ENCODE measurements at regions of chr17 and their contacts with region 1.

Region 1: DNA sequence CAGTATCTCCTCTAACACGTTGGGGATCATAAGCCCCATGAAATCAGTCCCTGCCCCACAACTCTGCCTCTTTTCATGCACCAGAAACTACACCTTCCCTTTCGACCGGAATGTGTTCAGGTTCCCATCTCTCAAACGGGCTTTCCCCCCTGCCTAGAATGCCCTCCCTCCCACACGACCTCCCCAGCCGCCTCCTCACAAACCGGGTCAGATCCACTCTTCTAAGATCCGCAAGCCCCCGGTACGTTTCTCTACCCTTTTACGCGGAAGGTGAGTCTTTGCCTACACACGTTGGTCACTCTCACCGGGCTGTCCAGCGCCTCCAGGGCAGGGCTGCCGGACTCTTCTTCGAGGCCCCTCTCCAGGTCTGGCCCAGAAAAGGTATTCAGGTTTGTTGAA is 708 bp downstream of the DHX33 start:
- DNase-seq: peak in 5 of 9 donors; percentile 11 to 44 (median 22)
- ATAC-seq: peak; percentile 34
- H3K4me3 ChIP-seq: peak overlapping the region; percentile 72
- H3K4me3 Mint-ChIP-seq: peak overlapping the region; percentile 83 to 95 (median 88)
- H3K27ac ChIP-seq: peak overlapping the region; percentile 68
- H3K27ac Mint-ChIP-seq: peak overlapping the region; percentile 12 to 85 (median 43)
- H3K4me1 ChIP-seq: peaks cover 11 to 12% of the 10 kb centered on the region in 2 donors
- H3K4me1 Mint-ChIP-seq: peaks cover 33 to 49% (median 43%) of the 10 kb centered on the region in 7 donors
- H3K27me3 ChIP-seq: no peaks in the 10 kb centered on the region
- H3K27me3 Mint-ChIP-seq: no peaks in the 10 kb centered on the region

Region 2: DNA sequence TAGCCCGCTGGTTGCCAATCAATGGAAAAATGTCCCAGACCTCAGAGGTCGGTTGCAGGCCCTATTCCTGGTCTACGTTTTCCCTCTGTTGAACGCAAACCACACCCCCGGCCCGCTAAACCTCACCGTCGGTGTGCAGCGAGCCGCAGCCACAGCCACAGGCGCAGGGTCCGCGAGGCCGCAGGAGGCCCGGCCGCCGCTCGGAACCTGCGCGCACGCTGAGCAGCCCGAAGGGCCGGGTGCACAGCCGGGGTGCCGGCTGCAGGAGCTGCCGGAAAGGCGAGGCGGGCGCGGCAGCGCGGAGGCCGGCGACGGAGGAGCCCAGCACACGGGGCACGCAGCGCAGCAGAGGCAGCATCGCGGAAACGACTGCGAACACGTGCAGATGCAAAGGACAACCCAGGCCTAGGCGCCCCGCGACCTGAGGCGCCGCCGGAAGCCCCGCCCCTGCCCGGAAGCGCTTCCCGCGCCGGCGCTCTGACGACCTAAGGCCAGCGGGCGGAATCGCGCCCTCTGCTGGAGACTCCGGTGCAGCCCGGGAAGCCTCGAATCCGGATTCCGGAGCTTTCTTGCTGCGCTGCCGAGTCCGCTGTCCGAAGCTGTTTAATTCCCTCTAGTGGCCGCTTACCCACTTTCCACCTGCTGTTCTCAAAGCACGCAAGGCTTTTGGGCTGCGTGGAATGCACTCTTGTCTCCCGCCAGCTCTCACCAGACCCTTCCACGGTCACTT is 29.2 kb before region 1 on chr17 and contains the start of gene C1QBP:
- CTCF ChIA-PET with region 1: interaction called, 3 read pairs
- POLR2A ChIA-PET with region 1: interaction called, 6 read pairs
- intact Hi-C with region 1: loop called (anchors 1 kb)
- DNase-seq: peak; percentile 85 to 96 (median 91)
- ATAC-seq: peak; percentile 98
- H3K4me3 ChIP-seq: peak within 1 kb of the TSS; percentile 80
- H3K4me3 Mint-ChIP-seq: peak within 1 kb of the TSS; percentile 80 to 95 (median 90)
- H3K27ac ChIP-seq: peak within 1 kb of the TSS; percentile 89
- H3K27ac Mint-ChIP-seq: peak within 1 kb of the TSS; percentile 90 to 98 (median 94)
- H3K4me1 ChIP-seq: peaks cover 19 to 28% of the 10 kb centered on the region in 2 donors
- H3K4me1 Mint-ChIP-seq: peaks cover 16 to 43% (median 37%) of the 10 kb centered on the region in 7 donors
- H3K27me3 ChIP-seq: no peaks in the 10 kb centered on the region
- H3K27me3 Mint-ChIP-seq: no peaks in the 10 kb centered on the region
- total RNA-seq, gene C1QBP: 58.0 to 162 (median 82.3) TPM